ENCODE measurements at regions of chr11 and their contacts with region 1.

Region 1: GRCh38 chr11:35144136-35144741 is 5.3 kb downstream of the CD44 start:
- DNase-seq: peak; percentile 87
- H3K4me3 Mint-ChIP-seq: peak overlapping the region; percentile 55
- H3K27ac Mint-ChIP-seq: peak overlapping the region; percentile 96
- H3K4me1 Mint-ChIP-seq: peaks cover 68% of the 10 kb centered on the region
- H3K27me3 Mint-ChIP-seq: no peaks in the 10 kb centered on the region

Region 2: DNA sequence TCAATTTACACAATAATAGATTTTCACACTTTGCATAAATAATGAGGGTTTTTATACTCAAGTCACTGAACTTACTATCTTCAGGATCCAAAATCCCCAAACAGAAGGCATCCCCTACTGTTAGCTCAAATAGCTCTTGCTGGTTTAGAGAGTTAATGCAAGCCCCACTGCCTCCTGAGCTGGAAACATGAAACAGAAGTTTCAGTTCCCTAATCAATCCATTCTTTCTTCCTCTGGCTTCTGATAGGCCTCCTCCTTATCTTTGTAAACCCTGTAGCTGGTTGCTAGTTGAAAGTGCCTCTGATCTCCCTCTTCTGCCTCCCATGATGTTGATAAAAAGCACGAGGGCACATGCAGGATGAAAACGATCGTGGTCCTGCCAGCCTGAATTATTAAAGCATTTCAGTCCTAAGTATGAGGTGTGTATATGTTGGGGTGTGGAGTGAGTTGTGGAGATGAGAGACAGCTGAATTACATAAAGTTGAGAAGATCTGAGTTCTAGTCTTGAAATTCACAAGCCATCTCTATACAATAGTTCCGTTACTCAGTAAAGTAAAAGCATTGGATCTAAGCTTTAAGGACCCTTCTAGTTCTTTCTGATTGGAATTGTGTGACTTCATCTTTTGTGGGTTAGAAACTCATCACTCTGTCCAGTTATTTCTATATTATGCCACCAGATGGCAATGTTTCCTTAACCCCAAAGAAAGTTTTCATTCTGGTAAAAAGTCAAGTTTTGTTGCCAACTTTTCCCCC is 558.3 kb before region 1 on chr11:
- CTCF ChIA-PET with region 1: no interaction called
- intact Hi-C with region 1: loop called (anchors 5 kb)
- DNase-seq: no peak
- H3K4me3 Mint-ChIP-seq: no peak overlapping the region
- H3K27ac Mint-ChIP-seq: no peak overlapping the region
- H3K4me1 Mint-ChIP-seq: peaks cover 4% of the 10 kb centered on the region
- H3K27me3 Mint-ChIP-seq: peaks cover 16% of the 10 kb centered on the region

Region 3: GRCh38 chr11:34997952-34998528 is 146.2 kb before region 1 on chr11:
- CTCF ChIA-PET with region 1: interaction called, 16 read pairs
- intact Hi-C with region 1: loop called (anchors 1 kb)
- DNase-seq: no peak
- H3K4me3 Mint-ChIP-seq: no peak overlapping the region
- H3K27ac Mint-ChIP-seq: peak overlapping the region; percentile 9
- H3K4me1 Mint-ChIP-seq: peaks cover 30% of the 10 kb centered on the region
- H3K27me3 Mint-ChIP-seq: no peaks in the 10 kb centered on the region

Region 4: GRCh38 chr11:35073691-35074419 is 70.4 kb before region 1 on chr11:
- CTCF ChIA-PET with region 1: interaction called, 5 read pairs
- intact Hi-C with region 1: loop called (anchors 1 kb)
- DNase-seq: peak; percentile 68
- H3K4me3 Mint-ChIP-seq: peak overlapping the region; percentile 31
- H3K27ac Mint-ChIP-seq: peak overlapping the region; percentile 83
- H3K4me1 Mint-ChIP-seq: peaks cover 67% of the 10 kb centered on the region
- H3K27me3 Mint-ChIP-seq: no peaks in the 10 kb centered on the region

Region 5: DNA sequence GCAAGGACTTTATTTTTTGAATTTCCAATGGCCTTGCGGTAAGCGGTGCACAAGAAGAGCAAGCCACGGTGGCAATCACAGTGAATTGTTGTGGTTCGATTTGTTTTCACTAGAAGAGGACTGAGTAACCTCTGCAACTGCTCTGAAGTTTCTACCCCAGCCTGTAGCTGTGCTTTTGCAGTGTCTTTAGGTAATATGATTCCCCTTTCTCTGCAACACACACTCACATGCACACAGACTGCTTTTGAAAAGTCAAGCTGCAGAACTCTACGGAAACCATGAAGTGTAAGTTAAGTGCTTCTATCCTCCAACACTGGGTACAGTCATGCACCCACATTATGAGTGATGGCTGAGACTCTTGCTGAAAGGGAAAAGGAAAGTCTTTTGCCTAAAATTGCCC is 33.1 kb after region 1 on chr11:
- CTCF ChIA-PET with region 1: interaction called, 11 read pairs
- intact Hi-C with region 1: loop called (anchors 1 kb)
- DNase-seq: peak; percentile 56
- H3K4me3 Mint-ChIP-seq: no peak overlapping the region
- H3K27ac Mint-ChIP-seq: peak overlapping the region; percentile 77
- H3K4me1 Mint-ChIP-seq: peaks cover 90% of the 10 kb centered on the region
- H3K27me3 Mint-ChIP-seq: no peaks in the 10 kb centered on the region

Region 6: DNA sequence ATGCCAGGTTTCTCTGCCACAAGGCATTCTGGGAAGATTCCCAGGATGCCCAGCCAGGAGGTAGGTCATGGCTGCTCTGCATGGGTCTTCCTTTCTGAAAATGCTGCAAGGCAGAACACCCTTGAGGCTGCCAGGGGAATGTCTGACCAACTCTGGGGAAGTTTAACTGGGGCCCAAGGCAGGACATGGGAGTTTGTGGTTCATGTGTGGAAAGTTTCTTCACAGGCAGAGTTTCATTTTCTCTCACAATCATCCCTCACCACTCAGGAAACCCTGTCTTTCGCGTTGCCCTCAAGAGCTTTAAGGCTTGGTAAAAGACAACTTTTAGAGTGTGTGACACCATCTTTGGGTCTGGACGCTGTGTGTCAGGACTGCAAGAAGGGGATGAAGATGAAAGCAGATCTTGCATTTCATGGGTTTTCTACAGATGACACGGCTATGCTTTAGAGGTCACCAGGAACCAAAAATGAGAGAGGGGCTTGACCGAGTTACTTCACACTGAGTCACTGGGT is 128.2 kb after region 1 on chr11:
- CTCF ChIA-PET with region 1: interaction called, 4 read pairs
- intact Hi-C with region 1: loop called (anchors 1 kb)
- DNase-seq: peak; percentile 70
- H3K4me3 Mint-ChIP-seq: peak overlapping the region; percentile 17
- H3K27ac Mint-ChIP-seq: peak overlapping the region; percentile 63
- H3K4me1 Mint-ChIP-seq: peaks cover 48% of the 10 kb centered on the region
- H3K27me3 Mint-ChIP-seq: no peaks in the 10 kb centered on the region

Region 7: GRCh38 chr11:35598254-35599125 is 454.3 kb after region 1 on chr11:
- CTCF ChIA-PET with region 1: no interaction called
- intact Hi-C with region 1: loop called (anchors 10 kb)
- DNase-seq: peak; percentile 78
- H3K4me3 Mint-ChIP-seq: no peak overlapping the region
- H3K27ac Mint-ChIP-seq: peak overlapping the region; percentile 68
- H3K4me1 Mint-ChIP-seq: peaks cover 17% of the 10 kb centered on the region
- H3K27me3 Mint-ChIP-seq: peaks cover 60% of the 10 kb centered on the region

Measured in activated naive CD4-positive, alpha-beta T cell treated with anti-CD3 and anti-CD28 coated beads for 36 hours (primary cell).